ENCODE measurements at regions of chr10 and their contacts with region 1.

Region 1: GRCh38 chr10:73879296-73880173 is 5.2 kb upstream of the CAMK2G start:
- DNase-seq: peak; percentile 91
- H3K4me3 ChIP-seq: no peak overlapping the region
- H3K27ac ChIP-seq: no peak overlapping the region
- H3K4me1 ChIP-seq: peaks cover 15% of the 10 kb centered on the region
- CTCF ChIP-seq: peak; percentile 97

Region 2: GRCh38 chr10:73772280-73773151 is 107.0 kb before region 1 on chr10:
- CTCF ChIA-PET with region 1: interaction called, 6 read pairs
- POLR2A ChIA-PET with region 1: no interaction called
- intact Hi-C with region 1: loop called (anchors 2 kb)
- DNase-seq: peak; percentile 82
- H3K4me3 ChIP-seq: peak overlapping the region; percentile 82
- H3K27ac ChIP-seq: peak overlapping the region; percentile 77
- H3K4me1 ChIP-seq: peaks cover 59% of the 10 kb centered on the region
- CTCF ChIP-seq: peak; percentile 45; the same call in 1 of the 2 replicates

Region 3: DNA sequence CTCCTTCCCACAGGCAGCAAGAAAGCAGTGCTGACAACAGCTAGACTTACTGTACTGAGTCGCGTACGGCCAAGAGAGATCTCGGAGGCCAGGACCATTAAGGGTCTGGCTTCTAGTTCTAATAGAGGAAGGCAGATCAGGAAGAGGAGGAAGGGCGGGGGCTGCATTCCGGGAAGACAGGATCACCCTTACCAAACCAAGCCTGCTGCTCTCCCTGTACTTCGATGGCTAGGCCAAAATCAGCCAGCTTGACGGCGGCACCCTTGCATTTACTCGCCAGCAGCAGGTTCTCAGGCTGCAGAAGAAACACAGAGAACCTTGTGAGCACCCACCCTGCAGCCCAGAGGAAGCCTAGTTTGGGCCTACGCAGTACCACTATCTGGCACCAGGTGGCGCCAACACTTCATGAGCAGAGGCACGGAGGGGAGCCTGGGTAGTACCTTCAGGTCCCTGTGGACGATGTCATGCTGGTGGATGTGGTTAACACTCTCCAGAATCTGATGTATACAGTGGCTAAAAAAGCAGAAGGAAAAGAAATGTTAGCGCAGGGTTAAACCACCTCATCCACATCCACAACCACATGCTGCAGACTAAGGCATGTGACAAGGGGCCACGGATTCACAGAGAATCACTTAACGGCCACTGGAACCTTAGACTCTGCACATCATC is 30.6 kb before region 1 on chr10:
- CTCF ChIA-PET with region 1: interaction called, 25 read pairs
- POLR2A ChIA-PET with region 1: interaction called, 13 read pairs
- intact Hi-C with region 1: loop called (anchors 1 kb)
- DNase-seq: peak; percentile 90
- H3K4me3 ChIP-seq: no peak overlapping the region
- H3K27ac ChIP-seq: no peak overlapping the region
- H3K4me1 ChIP-seq: peaks cover 7% of the 10 kb centered on the region
- CTCF ChIP-seq: peak; percentile 99

Region 4: DNA sequence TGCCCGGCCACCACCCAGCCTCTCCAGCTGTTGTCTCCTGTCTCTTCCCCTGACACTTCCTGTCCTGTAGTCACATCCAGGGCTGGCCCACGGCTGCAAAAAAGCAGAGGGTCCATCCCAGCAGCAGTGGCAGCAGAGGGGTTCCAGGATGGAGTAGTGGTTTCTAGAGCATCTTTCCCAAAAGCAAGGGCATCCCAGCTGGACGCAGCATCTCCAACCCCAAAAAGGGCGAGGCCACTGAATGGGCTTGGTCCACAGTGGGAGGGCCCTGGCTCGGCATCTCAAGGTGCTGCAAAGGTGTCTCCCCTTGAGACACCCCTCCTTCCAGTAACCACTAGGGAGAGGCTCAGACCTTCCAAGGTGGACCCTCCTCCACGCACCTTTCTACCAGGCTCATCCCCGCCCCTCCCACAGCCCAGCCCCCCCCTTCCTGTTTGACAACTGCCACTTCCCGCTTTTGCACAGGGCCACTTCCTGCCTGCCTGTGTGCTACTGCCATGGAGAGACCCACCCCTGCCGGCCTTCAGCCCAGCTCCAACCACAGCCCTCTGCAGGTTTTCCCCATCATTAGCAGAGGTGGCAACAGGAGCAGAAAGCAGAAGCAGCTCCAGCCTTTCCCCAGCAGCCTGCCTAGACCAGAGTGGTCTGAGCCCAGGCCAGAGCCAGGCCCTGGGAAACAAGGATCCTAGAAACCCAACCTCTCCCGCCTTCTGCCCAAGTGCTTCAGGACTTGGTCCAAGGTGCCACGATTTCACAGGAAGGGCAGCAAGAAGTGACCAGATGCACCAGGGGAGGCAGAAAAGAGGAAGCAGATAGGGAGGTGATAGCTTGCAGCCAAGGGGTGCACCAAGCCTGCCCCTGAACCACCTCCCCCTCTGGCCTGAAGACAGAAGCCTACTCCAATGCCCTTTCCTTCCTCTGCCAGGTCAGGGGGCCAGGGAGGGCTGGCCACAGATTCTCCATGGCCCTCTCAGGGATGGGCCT is 13.8 kb before region 1 on chr10:
- CTCF ChIA-PET with region 1: interaction called, 16 read pairs
- POLR2A ChIA-PET with region 1: interaction called, 22 read pairs
- intact Hi-C with region 1: no loop called
- DNase-seq: peak; percentile 85
- H3K4me3 ChIP-seq: peak overlapping the region; percentile 63
- H3K27ac ChIP-seq: peak overlapping the region; percentile 89
- H3K4me1 ChIP-seq: peaks cover 36% of the 10 kb centered on the region
- CTCF ChIP-seq: no peak

Region 5: DNA sequence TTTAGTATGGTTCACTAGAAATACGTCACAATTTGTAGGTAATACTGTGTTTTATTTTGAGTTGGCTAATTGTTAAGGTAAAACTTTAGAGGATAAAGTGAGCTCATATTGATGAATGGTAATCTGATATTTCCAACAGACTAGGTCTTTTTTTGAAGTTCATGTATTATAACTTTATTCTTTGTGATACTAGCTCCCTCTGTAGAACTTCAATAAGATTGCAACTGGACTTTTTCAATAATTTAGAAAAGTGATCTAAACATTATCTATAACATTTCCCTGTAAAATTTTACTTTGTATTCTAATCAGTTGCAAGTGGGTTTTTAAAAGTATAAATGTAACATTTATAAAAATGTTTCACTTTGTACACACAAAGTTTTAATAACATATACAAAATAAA is 355.0 kb after region 1 on chr10:
- CTCF ChIA-PET with region 1: no interaction called
- POLR2A ChIA-PET with region 1: no interaction called
- intact Hi-C with region 1: loop called (anchors 10 kb)
- DNase-seq: peak; percentile 20
- H3K4me3 ChIP-seq: no peak overlapping the region
- H3K27ac ChIP-seq: no peak overlapping the region
- H3K4me1 ChIP-seq: no peaks in the 10 kb centered on the region
- CTCF ChIP-seq: peak; percentile 81

Region 6: GRCh38 chr10:74293686-74294371 is 414.3 kb after region 1 on chr10:
- CTCF ChIA-PET with region 1: no interaction called
- POLR2A ChIA-PET with region 1: no interaction called
- intact Hi-C with region 1: no loop called
- DNase-seq: no peak
- H3K4me3 ChIP-seq: no peak overlapping the region
- H3K27ac ChIP-seq: no peak overlapping the region
- H3K4me1 ChIP-seq: no peaks in the 10 kb centered on the region
- CTCF ChIP-seq: no peak